ENCODE measurements at regions of chr7 and their contacts with region 1.

Region 1: DNA sequence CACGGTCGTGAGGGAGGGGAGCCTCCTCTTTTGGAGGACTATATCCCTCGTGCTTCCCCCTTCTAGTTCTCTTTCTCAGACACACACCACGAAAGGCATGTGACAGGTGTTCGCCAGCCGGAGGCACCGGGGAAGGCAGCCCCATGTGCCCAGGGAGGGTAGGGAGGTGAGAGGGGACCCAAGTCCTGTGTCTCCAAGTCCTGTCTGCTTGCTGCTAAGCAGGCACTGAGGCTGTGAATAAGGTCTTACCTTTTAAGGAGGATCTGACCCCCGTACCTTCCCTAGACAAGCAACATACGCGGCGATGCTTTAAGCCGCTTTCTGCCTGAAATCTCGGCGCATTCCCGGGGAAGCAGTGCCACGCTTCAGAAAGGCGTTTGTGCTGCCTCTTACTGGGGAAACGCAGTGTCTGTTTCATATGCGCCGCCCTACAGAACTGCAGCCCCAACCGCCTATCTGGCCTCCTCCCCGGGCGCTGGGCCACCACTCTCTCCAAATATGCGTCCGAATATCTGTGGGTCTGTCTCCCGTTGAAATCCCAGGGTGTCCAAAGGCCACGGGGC is 770 bp downstream of the PLXNA4 start:
- DNase-seq: peak; percentile 71
- H3K4me3 ChIP-seq: peak overlapping the region; percentile 34 to 73 (median 73)
- H3K27ac ChIP-seq: peak overlapping the region; percentile 7
- H3K4me1 ChIP-seq: peaks cover 54% of the 10 kb centered on the region
- H3K27me3 ChIP-seq: no peaks in the 10 kb centered on the region
- CTCF ChIP-seq: peak in 1 of 2 donors; percentile 44
- POLR2A ChIP-seq: no peak

Region 2: GRCh38 chr7:132557489-132558044 is 17.9 kb before region 1 on chr7:
- CTCF ChIA-PET with region 1: interaction called, 11 read pairs
- POLR2A ChIA-PET with region 1: no interaction called
- dilution Hi-C with region 1: no loop called
- intact Hi-C with region 1: no loop called
- DNase-seq: peak; percentile 31
- H3K4me3 ChIP-seq: no peak overlapping the region
- H3K27ac ChIP-seq: no peak overlapping the region
- H3K4me1 ChIP-seq: no peaks in the 10 kb centered on the region
- H3K27me3 ChIP-seq: no peaks in the 10 kb centered on the region
- CTCF ChIP-seq: no peak
- POLR2A ChIP-seq: no peak